HEK293 (cell line): ENCODE measurements at regions of chr3 and their contacts with region 1.

Region 1: GRCh38 chr3:169668957-169669681 is 5.6 kb upstream of the MECOM start:
- H3K4me3 ChIP-seq: peak overlapping the region; percentile 49
- H3K27ac ChIP-seq: peak overlapping the region; percentile 93
- H3K4me1 ChIP-seq: peaks cover 5% of the 10 kb centered on the region
- CTCF ChIP-seq: peak; percentile 93

Region 2: GRCh38 chr3:169149349-169149890 is 519.7 kb before region 1 on chr3:
- CTCF ChIA-PET with region 1: interaction called, 25 read pairs
- POLR2A ChIA-PET with region 1: interaction called, 6 read pairs
- H3K4me3 ChIP-seq: peak overlapping the region; percentile 43
- H3K27ac ChIP-seq: peak overlapping the region; percentile 66; the same call in 1 of the 2 replicates
- H3K4me1 ChIP-seq: peaks cover 4% of the 10 kb centered on the region; the same call in 1 of the 2 replicates
- CTCF ChIP-seq: no peak; the same call in none of the 2 replicates

Region 3: GRCh38 chr3:169218314-169218983 is 450.7 kb before region 1 on chr3:
- CTCF ChIA-PET with region 1: interaction called, 17 read pairs
- POLR2A ChIA-PET with region 1: no interaction called
- H3K4me3 ChIP-seq: no peak overlapping the region
- H3K27ac ChIP-seq: no peak overlapping the region
- H3K4me1 ChIP-seq: no peaks in the 10 kb centered on the region
- CTCF ChIP-seq: 0 out of 2 replicates have a peak, but pooled peaks have one; percentile 26

Region 4: DNA sequence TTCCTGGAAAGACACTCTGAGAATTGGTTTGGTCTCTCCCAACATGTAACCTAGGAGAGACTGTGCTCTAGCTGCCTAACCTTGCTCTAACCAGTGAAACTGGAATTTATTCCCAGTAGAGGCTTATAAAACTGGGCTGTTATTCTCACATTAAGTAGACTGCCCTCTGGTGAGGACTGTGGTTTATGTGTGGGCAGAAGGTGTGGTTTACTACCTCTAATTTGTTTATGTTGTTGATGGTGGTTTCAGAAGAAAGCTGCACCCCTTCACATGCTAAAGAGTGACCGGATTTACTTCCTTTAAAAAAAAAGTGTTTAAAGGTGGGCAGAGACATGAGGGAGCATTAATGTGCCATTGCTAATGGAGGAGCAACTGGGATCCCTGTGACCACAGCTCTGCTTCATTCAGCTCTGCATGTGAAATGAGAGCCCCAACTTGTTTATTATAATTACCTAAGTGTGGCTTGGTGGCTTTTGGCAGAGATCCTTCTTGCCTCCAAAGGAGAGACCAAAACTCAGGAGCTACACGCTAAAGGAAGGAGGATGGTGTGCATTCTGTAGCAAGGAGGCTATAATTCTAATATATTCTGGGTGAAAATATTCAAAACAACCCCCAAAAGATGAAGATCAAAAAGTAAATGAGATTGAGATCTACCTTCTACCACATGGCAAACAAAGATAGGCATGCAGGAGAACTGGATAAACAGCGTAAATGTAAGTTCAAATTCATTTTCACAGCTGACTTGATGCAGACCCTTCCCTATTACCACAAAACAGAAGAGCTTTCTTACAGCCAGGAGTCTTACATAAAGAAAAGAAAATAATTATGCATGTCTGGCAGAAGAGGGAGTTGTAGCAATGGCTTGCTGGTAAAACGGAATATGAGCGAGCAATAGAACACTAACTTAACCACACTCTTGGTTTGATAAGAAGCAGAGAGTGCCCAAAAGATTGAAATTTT is 278.6 kb before region 1 on chr3:
- CTCF ChIA-PET with region 1: interaction called, 10 read pairs
- POLR2A ChIA-PET with region 1: no interaction called
- H3K4me3 ChIP-seq: no peak overlapping the region
- H3K27ac ChIP-seq: peak overlapping the region; percentile 45; the same call in 1 of the 2 replicates
- H3K4me1 ChIP-seq: peaks cover 23% of the 10 kb centered on the region
- CTCF ChIP-seq: peak; percentile 23; the same call in 1 of the 2 replicates

Region 5: GRCh38 chr3:169744366-169745054 is 75.4 kb after region 1 on chr3:
- CTCF ChIA-PET with region 1: interaction called, 10 read pairs
- POLR2A ChIA-PET with region 1: no interaction called
- H3K4me3 ChIP-seq: no peak overlapping the region
- H3K27ac ChIP-seq: no peak overlapping the region
- H3K4me1 ChIP-seq: no peaks in the 10 kb centered on the region
- CTCF ChIP-seq: no peak